HEK293 (cell line): ENCODE measurements at regions of chr22 and their contacts with region 1.

Region 1: GRCh38 chr22:39490135-39490798 is 11.8 kb upstream of the MIEF1 start:
- H3K4me3 ChIP-seq: no peak overlapping the region
- H3K27ac ChIP-seq: no peak overlapping the region
- H3K4me1 ChIP-seq: no peaks in the 10 kb centered on the region
- CTCF ChIP-seq: no peak

Region 2: GRCh38 chr22:39446295-39446721 is 44.0 kb before region 1 on chr22:
- CTCF ChIA-PET with region 1: interaction called, 10 read pairs
- POLR2A ChIA-PET with region 1: no interaction called
- H3K4me3 ChIP-seq: no peak overlapping the region
- H3K27ac ChIP-seq: no peak overlapping the region
- H3K4me1 ChIP-seq: no peaks in the 10 kb centered on the region
- CTCF ChIP-seq: 0 out of 2 replicates have a peak, but pooled peaks have one; percentile 23

Region 3: GRCh38 chr22:39478441-39479264 is 11.6 kb before region 1 on chr22:
- CTCF ChIA-PET with region 1: interaction called, 17 read pairs
- POLR2A ChIA-PET with region 1: interaction called, 5 read pairs
- H3K4me3 ChIP-seq: no peak overlapping the region
- H3K27ac ChIP-seq: no peak overlapping the region
- H3K4me1 ChIP-seq: no peaks in the 10 kb centered on the region
- CTCF ChIP-seq: no peak

Region 4: GRCh38 chr22:39502109-39502788 is 12.0 kb after region 1 on chr22 and contains the start of gene MIEF1:
- CTCF ChIA-PET with region 1: interaction called, 12 read pairs
- POLR2A ChIA-PET with region 1: interaction called, 7 read pairs
- H3K4me3 ChIP-seq: peak within 1 kb of the TSS; percentile 92
- H3K27ac ChIP-seq: peak within 1 kb of the TSS; percentile 78
- H3K4me1 ChIP-seq: peaks cover 12% of the 10 kb centered on the region
- CTCF ChIP-seq: peak; percentile 12

Region 5: DNA sequence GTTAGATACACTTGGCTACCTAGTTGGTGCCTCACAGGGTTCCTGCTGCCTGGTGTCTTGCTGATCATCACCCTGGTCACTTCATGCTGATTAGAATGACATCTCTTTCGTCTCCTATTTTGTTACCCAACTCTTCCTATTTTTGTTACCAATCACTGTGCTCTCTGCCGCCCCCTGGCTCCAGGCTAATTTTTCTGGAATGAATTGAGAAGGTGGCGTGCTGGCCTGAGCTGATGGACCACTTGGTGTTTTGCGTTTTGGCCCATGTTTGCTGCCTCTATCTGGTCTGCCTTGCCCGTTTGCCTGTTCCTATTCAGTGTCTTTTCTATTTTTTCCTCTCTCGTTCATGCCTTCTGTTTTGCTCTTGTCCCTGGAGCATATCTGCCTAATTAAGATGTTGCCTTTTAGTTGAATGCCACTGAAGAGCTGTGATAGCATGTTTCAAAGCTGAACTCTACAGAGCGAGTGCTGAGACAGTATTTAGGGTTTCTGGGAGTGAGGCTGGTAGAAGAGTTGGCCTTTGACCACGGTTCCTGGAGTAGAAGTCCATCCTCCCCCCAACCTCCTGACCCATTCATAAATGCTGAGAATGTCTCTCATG is 24.2 kb after region 1 on chr22:
- CTCF ChIA-PET with region 1: interaction called, 70 read pairs
- POLR2A ChIA-PET with region 1: interaction called, 23 read pairs
- H3K4me3 ChIP-seq: no peak overlapping the region
- H3K27ac ChIP-seq: no peak overlapping the region
- H3K4me1 ChIP-seq: 0 out of 2 replicates have a peak, but pooled peaks cover 5% of the 10 kb centered on the region
- CTCF ChIP-seq: peak; percentile 64

Region 6: DNA sequence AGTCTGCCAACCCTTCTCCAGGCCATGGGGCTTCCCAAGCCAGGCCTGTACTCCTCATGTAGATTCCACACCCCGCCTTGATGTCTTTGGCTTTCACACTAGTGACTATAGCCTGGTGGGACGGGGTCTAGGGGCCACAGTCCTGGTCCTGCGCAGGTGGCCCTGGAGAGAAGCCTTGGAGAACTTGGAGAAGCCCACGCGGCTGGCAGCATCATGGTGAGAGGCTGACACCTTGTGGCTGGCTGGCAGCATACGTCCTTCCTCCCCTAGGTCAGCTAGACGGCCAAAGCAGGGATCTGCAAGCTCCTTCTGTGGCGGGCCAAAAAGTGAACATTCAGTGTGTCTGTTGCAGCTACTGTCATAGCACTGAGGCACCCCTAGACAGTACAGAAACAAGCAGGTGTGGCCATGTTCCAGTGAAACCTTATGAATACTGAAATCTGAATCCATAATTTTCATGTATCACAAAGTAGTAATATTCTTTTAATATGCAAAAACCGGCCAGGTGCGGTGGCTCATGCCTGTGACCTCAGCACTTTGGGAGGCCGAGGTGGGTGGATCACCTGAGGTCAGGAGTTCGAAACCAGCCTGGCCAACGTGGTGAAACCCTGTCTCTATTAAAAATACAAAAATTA is 546.4 kb after region 1 on chr22:
- CTCF ChIA-PET with region 1: interaction called, 17 read pairs
- POLR2A ChIA-PET with region 1: no interaction called
- H3K4me3 ChIP-seq: no peak overlapping the region
- H3K27ac ChIP-seq: no peak overlapping the region
- H3K4me1 ChIP-seq: peaks cover 16% of the 10 kb centered on the region
- CTCF ChIP-seq: peak; percentile 83